CD8-positive, alpha-beta T cell (primary cell): ENCODE measurements at regions of chr10 and their contacts with region 1.

Region 1: DNA sequence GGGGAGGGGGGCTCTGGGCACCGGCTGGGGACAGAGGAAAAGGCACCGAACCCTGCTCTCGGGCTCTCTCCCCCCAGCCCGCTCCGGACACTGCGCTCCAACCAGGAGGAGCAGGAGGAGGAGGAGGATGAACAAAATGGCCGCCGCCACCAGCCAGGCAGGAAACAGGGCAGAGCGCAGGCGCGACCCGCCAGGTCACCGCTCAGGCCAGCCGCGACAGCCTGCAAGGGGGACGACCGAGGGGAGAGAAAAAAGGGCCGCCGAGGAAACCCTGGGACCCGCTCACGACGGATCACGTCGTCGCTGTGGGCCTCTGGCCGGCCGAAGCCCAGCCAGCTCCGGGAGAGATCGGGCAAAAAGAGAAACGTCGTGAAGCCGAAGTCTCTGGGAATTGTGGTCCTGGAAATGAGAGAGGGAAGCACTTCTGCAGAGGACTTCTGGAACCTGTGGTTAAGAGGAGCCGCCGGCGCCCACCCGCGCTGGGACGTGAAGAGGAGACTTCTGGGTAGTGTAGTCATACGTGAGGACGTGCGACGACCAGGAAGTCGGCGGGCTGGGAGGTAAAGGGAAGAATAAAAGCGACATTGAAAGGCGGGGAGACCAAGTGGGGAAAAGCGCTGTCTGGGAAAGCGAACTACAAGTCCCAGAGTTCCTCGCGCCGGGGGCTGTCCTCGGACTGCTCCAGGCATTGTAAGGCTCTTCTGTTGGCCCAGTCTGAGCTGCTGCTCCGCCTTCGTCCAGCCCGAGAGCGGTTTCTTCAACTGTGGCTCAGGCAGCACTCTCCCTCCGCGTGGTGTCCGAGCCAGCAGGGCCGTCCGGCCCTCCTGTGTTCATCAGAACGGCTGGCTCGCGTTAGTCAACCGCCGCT is at the start of gene TIAL1:
- DNase-seq: peak; percentile 84 to 98 (median 92)
- ATAC-seq: peak; percentile 83
- H3K4me3 ChIP-seq: peak within 1 kb of the TSS; percentile 98 to 99
- H3K4me3 Mint-ChIP-seq: peak within 1 kb of the TSS; percentile 99
- H3K27ac ChIP-seq: peak within 1 kb of the TSS; percentile 79 to 96
- H3K27ac Mint-ChIP-seq: peak within 1 kb of the TSS; percentile 96
- H3K4me1 ChIP-seq: peaks cover 43% of the 10 kb centered on the region
- H3K4me1 Mint-ChIP-seq: peaks cover 48% of the 10 kb centered on the region
- H3K27me3 ChIP-seq: no peaks in the 10 kb centered on the region
- H3K27me3 Mint-ChIP-seq: no peaks in the 10 kb centered on the region
- CTCF ChIP-seq: no peak
- total RNA-seq, gene TIAL1: 159 to 172 TPM

Region 2: DNA sequence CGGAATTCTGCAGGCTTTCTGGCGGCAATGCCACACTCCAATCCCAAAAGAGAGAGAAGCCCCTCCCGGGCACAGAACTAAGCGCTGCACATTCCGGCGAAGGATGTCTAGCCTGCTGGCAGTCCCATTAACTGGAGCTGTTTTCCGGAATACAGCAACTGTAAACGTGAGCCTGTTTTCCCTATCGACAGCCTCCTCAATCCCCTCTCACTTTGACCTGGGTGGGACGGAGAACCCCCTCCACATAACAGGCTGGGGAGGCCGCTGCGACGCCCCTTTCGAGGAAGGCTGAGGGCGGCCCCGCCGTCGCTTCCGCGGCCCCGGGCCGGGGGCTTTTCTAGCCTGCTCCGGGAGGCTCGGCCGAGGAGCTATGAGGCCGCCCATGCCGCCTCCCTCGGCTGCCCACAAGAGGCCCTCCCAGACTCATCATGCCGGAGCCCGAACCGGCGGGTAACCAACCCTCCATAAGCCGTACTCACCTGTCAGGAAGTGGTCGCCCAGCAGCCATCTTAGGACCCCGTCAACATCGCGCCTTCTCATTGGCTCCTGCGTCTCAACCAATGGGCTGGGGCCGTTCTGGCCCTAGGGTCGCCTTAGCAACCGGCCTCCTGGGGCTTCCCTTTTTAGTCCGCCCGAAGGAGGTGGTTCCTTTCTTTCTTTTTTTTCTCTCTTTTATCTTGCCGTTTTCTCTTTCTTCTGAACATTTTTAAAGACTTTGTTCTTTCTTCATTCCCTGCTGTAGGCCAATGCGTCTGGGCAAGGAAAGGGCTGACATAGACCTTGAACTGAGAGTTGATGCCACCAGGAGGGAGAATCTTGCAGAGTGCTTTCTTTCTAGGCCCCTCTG is 1254.8 kb before region 1 on chr10 and contains the start of gene FAM204A:
- CTCF ChIA-PET with region 1: no interaction called
- POLR2A ChIA-PET with region 1: no interaction called
- intact Hi-C with region 1: loop called in 1 of 2 experiments (anchors 5 kb)
- DNase-seq: peak; percentile 95 to 99 (median 97)
- ATAC-seq: peak; percentile 94
- H3K4me3 ChIP-seq: peak within 1 kb of the TSS; percentile 81 to 86
- H3K4me3 Mint-ChIP-seq: peak within 1 kb of the TSS; percentile 96
- H3K27ac ChIP-seq: peak within 1 kb of the TSS; percentile 51 to 72
- H3K27ac Mint-ChIP-seq: peak within 1 kb of the TSS; percentile 95
- H3K4me1 ChIP-seq: peaks cover 22% of the 10 kb centered on the region
- H3K4me1 Mint-ChIP-seq: peaks cover 53% of the 10 kb centered on the region
- H3K27me3 ChIP-seq: no peaks in the 10 kb centered on the region
- H3K27me3 Mint-ChIP-seq: no peaks in the 10 kb centered on the region
- CTCF ChIP-seq: no peak
- total RNA-seq, gene FAM204A: 44.8 to 51.7 TPM

Region 3: GRCh38 chr10:119165171-119166110 is 431.3 kb before region 1 on chr10 and contains the start of gene SFXN4:
- CTCF ChIA-PET with region 1: no interaction called
- POLR2A ChIA-PET with region 1: no interaction called
- intact Hi-C with region 1: loop called (anchors 1 to 10 kb)
- DNase-seq: peak; percentile 59 to 89 (median 77)
- ATAC-seq: peak; percentile 93
- H3K4me3 ChIP-seq: peak within 1 kb of the TSS; percentile 49 to 80
- H3K4me3 Mint-ChIP-seq: peak within 1 kb of the TSS; percentile 95
- H3K27ac ChIP-seq: peak within 1 kb of the TSS; percentile 61 to 71
- H3K27ac Mint-ChIP-seq: peak within 1 kb of the TSS; percentile 96
- H3K4me1 ChIP-seq: peaks cover 18% of the 10 kb centered on the region
- H3K4me1 Mint-ChIP-seq: peaks cover 34% of the 10 kb centered on the region
- H3K27me3 ChIP-seq: no peaks in the 10 kb centered on the region
- H3K27me3 Mint-ChIP-seq: no peaks in the 10 kb centered on the region
- CTCF ChIP-seq: no peak
- total RNA-seq, gene SFXN4: 10.5 to 10.8 TPM

Region 4: DNA sequence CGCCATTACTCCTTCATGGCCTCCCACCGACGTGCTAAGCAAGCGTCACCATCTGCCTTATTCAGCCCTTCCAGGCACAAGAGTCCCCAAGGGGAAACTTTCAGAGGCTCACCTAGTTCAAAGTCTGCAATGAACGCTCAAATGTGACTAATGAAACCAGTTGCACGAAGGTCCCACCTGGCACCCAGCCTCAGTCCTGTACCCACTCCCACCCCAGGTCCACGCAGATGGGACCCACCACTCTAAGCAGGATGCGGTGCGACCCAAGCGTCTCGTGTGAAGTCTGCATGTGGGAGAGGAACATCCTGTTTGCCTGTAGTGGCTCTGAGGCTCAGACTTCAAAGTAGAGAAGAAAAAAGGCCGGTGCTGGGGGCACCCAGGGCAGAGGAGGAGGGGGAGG is 94.6 kb before region 1 on chr10:
- CTCF ChIA-PET with region 1: no interaction called
- POLR2A ChIA-PET with region 1: no interaction called
- intact Hi-C with region 1: loop called (anchors 5 kb)
- DNase-seq: peak; percentile 64 to 97 (median 88)
- ATAC-seq: peak; percentile 82
- H3K4me3 ChIP-seq: peak overlapping the region; percentile 0 to 18
- H3K4me3 Mint-ChIP-seq: peak overlapping the region; percentile 79
- H3K27ac ChIP-seq: peak overlapping the region; percentile 73 to 77
- H3K27ac Mint-ChIP-seq: peak overlapping the region; percentile 99
- H3K4me1 ChIP-seq: peaks cover 94% of the 10 kb centered on the region
- H3K4me1 Mint-ChIP-seq: peaks cover 91% of the 10 kb centered on the region
- H3K27me3 ChIP-seq: no peaks in the 10 kb centered on the region
- H3K27me3 Mint-ChIP-seq: no peaks in the 10 kb centered on the region
- CTCF ChIP-seq: no peak

Region 5: GRCh38 chr10:119555178-119555784 is 41.5 kb before region 1 on chr10:
- CTCF ChIA-PET with region 1: no interaction called
- POLR2A ChIA-PET with region 1: no interaction called
- intact Hi-C with region 1: no loop called
- DNase-seq: no peak
- ATAC-seq: no peak
- H3K4me3 ChIP-seq: no peak overlapping the region
- H3K4me3 Mint-ChIP-seq: no peak overlapping the region
- H3K27ac ChIP-seq: no peak overlapping the region
- H3K27ac Mint-ChIP-seq: no peak overlapping the region
- H3K4me1 ChIP-seq: no peaks in the 10 kb centered on the region
- H3K4me1 Mint-ChIP-seq: no peaks in the 10 kb centered on the region
- H3K27me3 ChIP-seq: no peaks in the 10 kb centered on the region
- H3K27me3 Mint-ChIP-seq: no peaks in the 10 kb centered on the region
- CTCF ChIP-seq: no peak

Region 6: GRCh38 chr10:119575991-119576390 is 20.8 kb before region 1 on chr10:
- CTCF ChIA-PET with region 1: interaction called, 4 read pairs
- POLR2A ChIA-PET with region 1: no interaction called
- intact Hi-C with region 1: loop called in 1 of 2 experiments (anchors 2 kb)
- DNase-seq: peak in 2 of 9 experiments; percentile 50 to 65
- ATAC-seq: no peak
- H3K4me3 ChIP-seq: no peak overlapping the region
- H3K4me3 Mint-ChIP-seq: no peak overlapping the region
- H3K27ac ChIP-seq: peak overlapping the region in 1 of 2 experiments; percentile 53
- H3K27ac Mint-ChIP-seq: peak overlapping the region; percentile 86
- H3K4me1 ChIP-seq: peaks cover 17% of the 10 kb centered on the region
- H3K4me1 Mint-ChIP-seq: peaks cover 18% of the 10 kb centered on the region
- H3K27me3 ChIP-seq: no peaks in the 10 kb centered on the region
- H3K27me3 Mint-ChIP-seq: no peaks in the 10 kb centered on the region
- CTCF ChIP-seq: no peak

Region 7: GRCh38 chr10:119859420-119860258 is 262.9 kb after region 1 on chr10:
- CTCF ChIA-PET with region 1: interaction called, 3 read pairs
- POLR2A ChIA-PET with region 1: no interaction called
- intact Hi-C with region 1: loop called in 1 of 2 experiments (anchors 5 kb)
- DNase-seq: peak in 2 of 9 experiments; percentile 59 to 72
- ATAC-seq: peak; percentile 78
- H3K4me3 ChIP-seq: no peak overlapping the region
- H3K4me3 Mint-ChIP-seq: no peak overlapping the region
- H3K27ac ChIP-seq: peak overlapping the region in 1 of 2 experiments; percentile 23
- H3K27ac Mint-ChIP-seq: peak overlapping the region; percentile 30
- H3K4me1 ChIP-seq: peaks cover 10% of the 10 kb centered on the region
- H3K4me1 Mint-ChIP-seq: peaks cover 32% of the 10 kb centered on the region
- H3K27me3 ChIP-seq: no peaks in the 10 kb centered on the region
- H3K27me3 Mint-ChIP-seq: no peaks in the 10 kb centered on the region
- CTCF ChIP-seq: peak; percentile 79

Region 8: DNA sequence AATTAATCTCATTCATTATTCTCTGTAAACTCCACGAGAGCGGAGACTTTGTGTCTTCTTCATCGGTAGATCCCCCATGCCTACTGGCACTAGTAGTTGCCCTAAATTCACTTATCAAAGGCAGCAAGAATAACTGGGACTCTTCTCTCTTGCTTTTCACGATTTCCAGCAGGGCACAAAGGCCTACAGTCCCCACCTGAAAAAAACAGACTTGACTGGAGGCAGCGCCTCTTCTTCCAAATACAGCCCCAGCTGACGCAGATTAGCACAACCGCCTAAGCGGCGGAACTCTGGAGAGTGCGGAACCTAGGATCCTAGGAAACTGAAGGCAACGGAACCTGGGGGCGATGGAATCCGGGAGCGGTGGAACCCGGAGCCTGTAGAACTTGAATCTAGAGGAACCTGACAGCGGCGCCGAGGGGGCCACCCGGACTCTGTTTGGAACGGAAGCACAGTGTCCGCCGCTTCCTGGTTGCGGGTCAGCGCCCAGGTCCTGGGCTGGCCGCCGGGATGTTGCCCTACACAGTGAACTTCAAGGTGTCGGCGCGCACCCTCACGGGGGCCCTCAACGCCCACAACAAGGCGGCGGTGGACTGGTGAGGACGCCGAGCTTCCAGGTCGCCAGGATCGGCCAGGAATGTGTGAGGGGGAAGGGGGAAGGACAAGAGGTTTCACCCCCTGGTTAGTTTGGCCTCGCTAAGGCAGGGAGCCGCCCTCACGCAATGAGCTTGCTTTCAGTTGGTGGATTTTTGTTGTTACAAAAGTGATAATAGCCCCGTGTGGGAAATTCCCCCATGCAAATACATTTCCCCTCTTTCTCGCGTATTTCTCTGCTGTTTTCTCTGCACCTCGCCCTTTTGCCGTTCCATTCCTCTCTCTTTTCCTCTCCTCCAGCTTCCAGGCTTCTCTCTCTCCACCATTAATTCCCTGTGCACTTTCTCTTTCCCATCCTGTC is 1254.4 kb after region 1 on chr10 and contains the start of gene WDR11:
- CTCF ChIA-PET with region 1: no interaction called
- POLR2A ChIA-PET with region 1: no interaction called
- intact Hi-C with region 1: loop called in 1 of 2 experiments (anchors 10 kb)
- DNase-seq: peak; percentile 22 to 85 (median 67)
- ATAC-seq: peak; percentile 87
- H3K4me3 ChIP-seq: peak within 1 kb of the TSS; percentile 80 to 88
- H3K4me3 Mint-ChIP-seq: peak within 1 kb of the TSS; percentile 97
- H3K27ac ChIP-seq: peak within 1 kb of the TSS; percentile 52 to 86
- H3K27ac Mint-ChIP-seq: peak within 1 kb of the TSS; percentile 97
- H3K4me1 ChIP-seq: peaks cover 10% of the 10 kb centered on the region
- H3K4me1 Mint-ChIP-seq: peaks cover 44% of the 10 kb centered on the region
- H3K27me3 ChIP-seq: no peaks in the 10 kb centered on the region
- H3K27me3 Mint-ChIP-seq: no peaks in the 10 kb centered on the region
- CTCF ChIP-seq: no peak
- total RNA-seq, gene WDR11: 19.8 to 23.0 TPM